CD14-positive monocyte (primary cell): ENCODE measurements at regions of chr22 and their contacts with region 1.

Region 1: DNA sequence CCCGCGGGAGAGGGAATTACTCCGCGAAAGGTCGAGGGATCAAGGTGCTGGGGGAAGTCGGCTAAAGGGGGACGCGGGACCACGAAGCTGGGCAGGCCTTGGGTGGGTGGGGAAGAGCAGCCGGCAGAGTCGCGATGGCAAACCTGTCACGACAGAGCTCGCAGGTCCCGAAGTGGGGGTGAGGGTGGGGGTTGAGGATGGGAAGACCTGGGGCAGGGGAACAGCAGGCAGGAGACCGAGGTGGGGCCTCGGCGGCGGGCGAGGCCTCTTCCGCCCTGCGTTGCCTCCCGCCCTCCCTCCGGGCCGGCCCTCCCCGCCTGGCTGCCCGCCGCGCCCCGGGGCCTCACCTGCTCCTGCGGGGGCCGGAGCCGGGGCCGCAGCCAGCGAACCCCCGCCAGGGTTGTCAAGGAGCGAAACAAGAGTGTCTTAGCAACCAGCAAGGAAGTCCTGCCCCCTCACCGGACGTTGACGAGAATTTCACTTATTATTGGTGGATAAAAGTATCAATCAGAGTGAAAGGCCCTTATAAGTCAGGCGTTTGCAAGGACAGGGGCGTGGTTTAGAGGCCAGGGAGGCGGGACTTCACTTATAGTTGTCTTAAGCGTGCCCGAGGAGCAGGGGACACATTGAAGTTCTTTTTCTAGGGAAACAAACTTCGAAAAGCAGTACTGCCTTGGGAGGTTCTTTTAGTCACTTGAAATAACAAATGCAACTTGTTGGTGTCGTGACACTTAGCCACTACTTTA is at the start of gene DNAL4:
- DNase-seq: peak; percentile 93 to 98 (median 93)
- H3K4me3 ChIP-seq: peak within 1 kb of the TSS; percentile 53 to 91 (median 58)
- H3K4me3 Mint-ChIP-seq: peak within 1 kb of the TSS; percentile 71 to 87
- H3K27ac ChIP-seq: peak within 1 kb of the TSS in 1 of 2 donors; percentile 84
- H3K27ac Mint-ChIP-seq: peak within 1 kb of the TSS; percentile 34 to 94 (median 84)
- H3K4me1 ChIP-seq: peaks cover 13 to 14% of the 10 kb centered on the region in 2 donors
- H3K4me1 Mint-ChIP-seq: peaks cover 13% of the 10 kb centered on the region
- H3K27me3 ChIP-seq: peaks cover 2 to 4% of the 10 kb centered on the region in 2 donors
- H3K27me3 Mint-ChIP-seq: peaks cover 10 to 25% (median 16%) of the 10 kb centered on the region in 3 donors
- CTCF ChIP-seq: no peak
- polyA plus RNA-seq, gene DNAL4: 8.9 to 9.3 (median 9.0) TPM

Region 2: GRCh38 chr22:37538590-37539357 is 1255.1 kb before region 1 on chr22:
- intact Hi-C with region 1: no loop called
- DNase-seq: peak; percentile 89 to 91 (median 90)
- H3K4me3 ChIP-seq: peak overlapping the region in 1 of 3 experiments; percentile 26
- H3K4me3 Mint-ChIP-seq: peak overlapping the region; percentile 6 to 78
- H3K27ac ChIP-seq: peak overlapping the region in 1 of 2 donors; percentile 14
- H3K27ac Mint-ChIP-seq: peak overlapping the region; percentile 62 to 86 (median 80)
- H3K4me1 ChIP-seq: peaks cover 32 to 49% of the 10 kb centered on the region in 2 donors
- H3K4me1 Mint-ChIP-seq: peaks cover 45% of the 10 kb centered on the region
- H3K27me3 ChIP-seq: no peaks in the 10 kb centered on the region
- H3K27me3 Mint-ChIP-seq: peaks cover 4 to 5% (median 4%) of the 10 kb centered on the region in 3 donors
- CTCF ChIP-seq: peak; percentile 96

Region 3: GRCh38 chr22:38755911-38756532 is 37.9 kb before region 1 on chr22 and contains the start of gene SUN2:
- intact Hi-C with region 1: loop called in 1 of 2 experiments (anchors 1 kb)
- DNase-seq: peak; percentile 89 to 90 (median 90)
- H3K4me3 ChIP-seq: peak within 1 kb of the TSS; percentile 88 to 98 (median 92)
- H3K4me3 Mint-ChIP-seq: peak within 1 kb of the TSS; percentile 93 to 97
- H3K27ac ChIP-seq: peak within 1 kb of the TSS; percentile 99 to 100
- H3K27ac Mint-ChIP-seq: peak within 1 kb of the TSS; percentile 98 to 100 (median 99)
- H3K4me1 ChIP-seq: peaks cover 64 to 70% of the 10 kb centered on the region in 2 donors
- H3K4me1 Mint-ChIP-seq: peaks cover 68% of the 10 kb centered on the region
- H3K27me3 ChIP-seq: no peaks in the 10 kb centered on the region
- H3K27me3 Mint-ChIP-seq: peaks cover 0 to 3% (median 0%) of the 10 kb centered on the region in 3 donors
- CTCF ChIP-seq: no peak
- polyA plus RNA-seq, gene SUN2: 95.8 to 159 (median 97.8) TPM

Region 4: DNA sequence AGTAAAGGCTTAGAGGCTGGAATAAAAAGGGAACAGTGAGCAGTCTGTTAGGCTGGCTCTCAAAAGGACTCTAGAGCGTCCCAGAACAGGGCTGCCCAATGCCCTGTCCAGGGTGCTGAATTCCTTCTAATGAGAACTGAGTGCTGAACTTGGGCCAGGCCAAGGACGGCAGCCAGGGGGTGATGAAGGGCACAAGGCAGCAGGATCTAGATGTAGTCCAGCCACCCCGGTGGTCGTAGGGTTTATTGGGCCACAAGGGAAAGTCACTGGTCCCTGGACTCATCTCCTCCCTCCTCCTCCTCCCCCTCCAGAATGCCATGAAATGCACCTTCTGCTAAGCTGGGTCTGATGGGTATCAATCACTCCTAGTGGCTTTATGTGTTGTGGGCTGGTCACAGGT is 30.7 kb after region 1 on chr22:
- intact Hi-C with region 1: no loop called
- DNase-seq: peak; percentile 15 to 31 (median 15)
- H3K4me3 ChIP-seq: no peak overlapping the region
- H3K4me3 Mint-ChIP-seq: no peak overlapping the region
- H3K27ac ChIP-seq: no peak overlapping the region
- H3K27ac Mint-ChIP-seq: no peak overlapping the region
- H3K4me1 ChIP-seq: no peaks in the 10 kb centered on the region
- H3K4me1 Mint-ChIP-seq: no peaks in the 10 kb centered on the region
- H3K27me3 ChIP-seq: no peaks in the 10 kb centered on the region
- H3K27me3 Mint-ChIP-seq: peaks cover 0 to 8% (median 0%) of the 10 kb centered on the region in 3 donors
- CTCF ChIP-seq: peak; percentile 28

Region 5: GRCh38 chr22:39292561-39293098 is 498.7 kb after region 1 on chr22:
- intact Hi-C with region 1: no loop called
- DNase-seq: peak; percentile 94 to 96 (median 96)
- H3K4me3 ChIP-seq: peak overlapping the region in 1 of 3 experiments; percentile 9
- H3K4me3 Mint-ChIP-seq: peak overlapping the region in 1 of 2 donors; percentile 65
- H3K27ac ChIP-seq: peak overlapping the region; percentile 94 to 95
- H3K27ac Mint-ChIP-seq: peak overlapping the region; percentile 95 to 99 (median 96)
- H3K4me1 ChIP-seq: peaks cover 34 to 47% of the 10 kb centered on the region in 2 donors
- H3K4me1 Mint-ChIP-seq: peaks cover 48% of the 10 kb centered on the region
- H3K27me3 ChIP-seq: no peaks in the 10 kb centered on the region
- H3K27me3 Mint-ChIP-seq: peaks cover 0 to 13% (median 4%) of the 10 kb centered on the region in 3 donors
- CTCF ChIP-seq: no peak